Activated CD4-positive, alpha-beta T cell treated with anti-CD3 and anti-CD28 coated beads, Interleukin-2, amount 10 ng/mL, durations not matched to agents 7 days and 5 days (primary cell): ENCODE measurements at regions of chr17 and their contacts with region 1.

Region 1: GRCh38 chr17:46193626-46194392 is 580 bp upstream of the KANSL1 start:
- DNase-seq: peak; percentile 94
- H3K4me3 Mint-ChIP-seq: peak overlapping the region; percentile 74
- H3K27ac Mint-ChIP-seq: peak overlapping the region; percentile 99
- H3K4me1 Mint-ChIP-seq: peaks cover 54% of the 10 kb centered on the region
- H3K27me3 Mint-ChIP-seq: no peaks in the 10 kb centered on the region

Region 2: GRCh38 chr17:46179375-46179999 is 14.3 kb before region 1 on chr17:
- CTCF ChIA-PET with region 1: interaction called, 73 read pairs
- POLR2A ChIA-PET with region 1: no interaction called
- DNase-seq: no peak
- H3K4me3 Mint-ChIP-seq: no peak overlapping the region
- H3K27ac Mint-ChIP-seq: peak overlapping the region; percentile 27
- H3K4me1 Mint-ChIP-seq: peaks cover 73% of the 10 kb centered on the region
- H3K27me3 Mint-ChIP-seq: no peaks in the 10 kb centered on the region

Region 3: DNA sequence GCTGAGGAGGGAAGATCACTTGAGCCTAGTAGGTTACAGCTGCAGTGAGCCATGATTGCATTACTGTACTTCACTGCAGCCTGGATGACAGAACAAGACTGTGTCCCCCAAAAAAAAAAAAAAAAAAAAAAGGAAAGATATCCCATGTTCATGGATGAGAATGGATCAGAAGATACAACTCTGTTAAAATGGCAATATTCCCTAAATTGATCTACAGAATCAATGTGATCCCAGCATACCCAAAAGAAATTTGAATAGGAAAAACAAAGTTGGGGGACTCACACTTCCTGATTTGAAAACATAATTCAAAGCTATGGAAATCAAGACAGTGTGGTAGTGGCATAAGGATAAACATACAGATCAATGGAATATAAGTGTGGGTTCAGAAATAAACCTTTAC is 12.2 kb after region 1 on chr17:
- CTCF ChIA-PET with region 1: interaction called, 15 read pairs
- POLR2A ChIA-PET with region 1: interaction called, 3 read pairs
- DNase-seq: no peak
- H3K4me3 Mint-ChIP-seq: no peak overlapping the region
- H3K27ac Mint-ChIP-seq: no peak overlapping the region
- H3K4me1 Mint-ChIP-seq: peaks cover 13% of the 10 kb centered on the region
- H3K27me3 Mint-ChIP-seq: no peaks in the 10 kb centered on the region